AG04449 (cell line): ENCODE measurements at regions of chr7 and their contacts with region 1.

Region 1: DNA sequence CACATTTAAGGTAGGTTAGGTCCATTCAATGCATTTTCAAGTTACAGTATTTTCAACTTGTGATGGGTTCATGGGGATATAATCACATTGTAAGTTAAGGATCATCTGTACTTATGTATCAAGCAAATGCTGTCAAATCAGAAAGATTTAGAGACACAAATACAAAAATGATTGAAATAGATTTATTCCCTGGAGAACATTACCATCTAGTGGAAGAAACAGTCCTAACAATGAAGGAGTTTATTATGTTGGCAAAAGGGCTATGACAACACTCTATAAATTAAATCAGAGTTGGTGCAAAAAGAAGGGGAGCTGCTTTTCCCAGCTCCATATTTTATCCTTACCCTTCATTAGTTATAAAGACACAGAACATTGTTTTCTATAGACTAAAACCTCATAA is 69.0 kb downstream of the PRSS58 start:
- DNase-seq: no peak
- H3K4me3 ChIP-seq: no peak overlapping the region
- CTCF ChIP-seq: no peak

Region 2: GRCh38 chr7:141477865-141478264 is 711.0 kb before region 1 on chr7:
- CTCF ChIA-PET with region 1: no interaction called
- POLR2A ChIA-PET with region 1: no interaction called
- DNase-seq: no peak
- H3K4me3 ChIP-seq: no peak overlapping the region
- CTCF ChIP-seq: no peak

Region 3: DNA sequence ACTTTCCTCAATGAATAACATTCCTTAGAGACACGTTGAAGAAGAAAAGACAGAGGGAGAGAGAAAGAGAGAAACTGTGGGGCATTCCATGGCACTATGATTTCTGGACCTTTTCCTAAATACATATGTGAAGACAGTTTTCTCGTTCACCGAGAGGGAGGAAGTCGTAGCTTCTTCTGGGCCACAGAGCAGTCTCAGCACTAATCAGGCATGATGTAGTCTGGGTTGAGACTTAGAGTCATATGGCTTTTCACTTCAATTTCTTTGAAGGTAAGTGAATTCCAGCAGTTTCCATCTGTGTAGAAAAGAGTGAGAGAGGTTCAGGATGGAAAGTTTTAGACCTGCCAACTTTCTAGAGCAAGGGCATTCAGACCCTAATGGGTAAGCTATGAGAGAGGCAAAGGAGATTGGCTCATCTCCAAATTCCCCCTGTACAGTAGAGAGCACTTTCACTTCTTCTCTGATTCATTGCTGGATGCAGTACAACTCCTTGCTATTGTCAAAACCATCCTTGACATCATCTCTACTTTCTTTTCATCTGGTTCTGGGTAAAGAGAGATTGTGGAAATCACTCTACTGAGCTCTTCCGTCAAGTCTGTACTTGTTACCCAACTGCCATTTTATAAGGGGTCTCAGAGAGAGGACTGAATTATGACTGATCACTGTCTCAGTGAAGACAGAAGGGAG is 304.2 kb before region 1 on chr7:
- CTCF ChIA-PET with region 1: no interaction called
- POLR2A ChIA-PET with region 1: no interaction called
- DNase-seq: no peak
- H3K4me3 ChIP-seq: no peak overlapping the region
- CTCF ChIP-seq: no peak

Region 4: DNA sequence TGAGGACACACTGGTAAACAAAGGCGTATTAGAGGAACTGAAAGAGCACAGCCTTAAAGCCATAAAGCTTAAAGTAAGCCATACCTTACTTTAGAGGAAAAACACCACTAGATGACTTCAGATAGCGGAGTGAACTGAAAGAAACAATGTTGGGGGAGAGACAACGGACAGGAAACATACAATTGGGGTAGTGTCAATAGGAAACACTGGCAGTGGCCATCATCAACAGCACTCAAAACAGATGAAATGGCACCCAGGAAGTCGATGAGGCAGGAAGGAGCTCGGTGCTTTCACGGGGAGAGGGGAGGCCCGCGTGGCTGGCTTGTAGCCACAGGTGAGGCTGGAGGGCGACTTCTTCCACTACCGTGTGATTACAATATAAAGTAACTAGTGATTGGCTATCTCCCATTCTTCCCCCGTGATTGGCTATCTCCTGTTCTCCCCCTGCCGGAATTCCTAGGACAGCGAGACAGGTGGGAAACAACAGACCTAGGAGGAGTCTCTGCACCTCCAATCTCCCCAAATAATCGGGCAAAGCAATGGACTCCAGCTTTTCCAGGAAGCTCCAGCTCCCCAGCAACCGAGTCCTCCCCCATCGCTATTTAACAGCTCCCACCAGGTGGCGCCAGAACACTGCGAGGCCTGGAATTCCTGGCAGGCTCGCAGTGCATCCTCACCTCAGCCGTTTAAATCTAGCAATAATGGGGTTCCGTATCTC is 212.9 kb before region 1 on chr7:
- CTCF ChIA-PET with region 1: interaction called, 17 read pairs
- POLR2A ChIA-PET with region 1: no interaction called
- DNase-seq: no peak
- H3K4me3 ChIP-seq: no peak overlapping the region
- CTCF ChIP-seq: peak; percentile 16